Left ventricle myocardium inferior (tissue), 1 donor: ENCODE measurements at regions of chr20 and their contacts with region 1.

Region 1: DNA sequence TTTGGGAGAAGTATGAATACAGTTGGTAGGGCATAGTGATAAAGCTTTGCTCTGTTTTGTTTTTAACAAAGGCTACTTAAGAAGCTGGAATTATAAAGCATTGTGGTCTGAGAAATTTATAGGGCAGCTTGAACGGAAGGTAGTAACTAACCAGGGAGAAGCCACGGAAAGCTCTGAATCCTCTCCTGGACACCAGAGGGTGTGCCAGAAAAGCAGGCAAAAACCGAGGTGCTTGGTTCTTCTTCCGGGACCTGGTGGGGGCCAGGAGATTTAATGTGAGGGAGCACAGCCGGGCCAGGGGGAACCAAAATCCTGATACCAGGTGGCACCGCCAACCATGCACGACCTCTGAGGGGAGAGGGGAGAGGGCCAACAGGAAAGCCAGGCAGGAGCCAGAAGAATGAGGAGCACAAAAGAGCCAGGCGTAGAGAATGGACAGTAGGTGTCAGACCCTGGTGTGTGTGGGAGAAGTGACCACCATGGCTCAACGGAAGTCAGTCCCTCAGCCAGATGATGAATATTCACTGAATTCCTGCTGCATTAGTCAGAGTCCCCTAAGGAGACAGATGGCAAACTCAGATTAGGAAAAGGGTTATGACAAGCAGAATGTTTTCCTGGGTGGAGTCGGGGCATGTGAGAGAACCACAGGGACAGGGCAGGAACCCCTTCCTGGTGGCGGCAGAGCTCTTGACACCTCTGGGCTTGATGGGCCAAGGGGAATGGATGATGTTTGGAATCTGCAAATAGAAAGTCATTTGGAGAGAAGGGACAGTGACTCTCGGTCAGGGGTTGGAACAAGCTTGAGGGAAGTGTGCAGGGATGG is 262.3 kb downstream of the ZNF217 start:
- DNase-seq: no peak
- H3K4me3 ChIP-seq: no peak overlapping the region
- H3K27ac ChIP-seq: peak overlapping the region; percentile 61
- H3K4me1 ChIP-seq: peaks cover 41% of the 10 kb centered on the region
- H3K27me3 ChIP-seq: no peaks in the 10 kb centered on the region
- CTCF ChIP-seq: no peak

Region 2: GRCh38 chr20:53216856-53217576 is 114.3 kb before region 1 on chr20:
- intact Hi-C with region 1: no loop called
- DNase-seq: peak; percentile 66
- H3K4me3 ChIP-seq: peak overlapping the region; percentile 29
- H3K27ac ChIP-seq: no peak overlapping the region
- H3K4me1 ChIP-seq: peaks cover 6% of the 10 kb centered on the region
- H3K27me3 ChIP-seq: peaks cover 12% of the 10 kb centered on the region
- CTCF ChIP-seq: peak; percentile 92

Region 3: GRCh38 chr20:53408691-53409446 is 77.5 kb after region 1 on chr20:
- intact Hi-C with region 1: loop called (anchors 5 kb)
- DNase-seq: no peak
- H3K4me3 ChIP-seq: no peak overlapping the region
- H3K27ac ChIP-seq: peak overlapping the region; percentile 57
- H3K4me1 ChIP-seq: peaks cover 14% of the 10 kb centered on the region
- H3K27me3 ChIP-seq: no peaks in the 10 kb centered on the region
- CTCF ChIP-seq: no peak